Right ventricle myocardium inferior (tissue), 1 donor: ENCODE measurements at regions of chr20 and their contacts with region 1.

Region 1: DNA sequence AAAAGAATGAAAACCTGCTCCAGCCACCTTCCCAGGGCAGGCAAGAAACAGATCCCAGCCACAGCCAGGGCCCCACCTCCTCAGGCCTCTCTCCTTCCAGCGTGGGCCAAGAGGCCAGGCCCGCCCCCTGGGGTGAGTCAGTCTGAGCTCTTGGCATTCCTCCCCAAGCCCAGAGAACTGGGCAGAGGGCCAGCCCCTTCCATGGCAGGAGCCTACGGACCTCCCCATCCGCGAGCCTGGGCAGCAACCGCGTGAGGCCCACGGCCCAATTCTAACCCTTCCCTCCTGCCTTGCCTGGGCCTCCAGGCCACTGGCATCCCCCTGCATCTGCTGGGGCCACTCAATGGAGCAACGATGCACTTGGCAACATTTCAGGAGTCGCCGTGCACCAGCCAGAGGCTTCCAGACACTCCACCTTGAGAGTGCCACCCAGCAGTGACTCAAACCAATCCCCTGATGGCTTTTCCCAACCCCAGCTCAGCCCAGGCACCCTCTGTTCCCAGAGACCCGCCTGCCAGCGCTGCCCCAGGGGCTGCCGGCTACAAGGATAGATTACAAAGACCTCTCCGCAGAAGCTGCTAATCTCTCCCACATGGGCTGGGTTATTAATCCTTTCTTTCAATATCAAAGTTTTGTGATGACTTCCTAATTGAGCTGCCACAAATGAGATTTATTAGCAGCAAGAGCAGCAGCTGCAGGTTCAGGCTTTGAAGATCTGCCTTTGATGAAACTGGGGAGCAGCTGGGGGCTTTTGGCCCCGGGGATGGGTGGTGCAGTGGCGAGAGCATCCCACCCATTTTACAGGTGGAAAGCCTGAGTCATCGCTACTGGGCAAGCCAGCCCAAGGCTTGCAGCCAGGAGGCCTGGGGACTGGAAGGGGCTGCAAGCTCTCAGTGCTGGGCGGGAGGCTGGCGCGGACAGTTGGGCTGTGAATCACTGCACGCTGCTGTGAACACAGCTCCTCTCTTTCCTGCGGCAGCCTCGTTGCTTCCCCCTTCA is 85.7 kb downstream of the NFATC2 start:
- DNase-seq: peak; percentile 95
- ATAC-seq: peak; percentile 98

Region 2: GRCh38 chr20:51385646-51386530 is 70.9 kb before region 1 on chr20:
- intact Hi-C with region 1: loop called (anchors 5 kb)
- DNase-seq: no peak
- ATAC-seq: peak; percentile 39

Region 3: DNA sequence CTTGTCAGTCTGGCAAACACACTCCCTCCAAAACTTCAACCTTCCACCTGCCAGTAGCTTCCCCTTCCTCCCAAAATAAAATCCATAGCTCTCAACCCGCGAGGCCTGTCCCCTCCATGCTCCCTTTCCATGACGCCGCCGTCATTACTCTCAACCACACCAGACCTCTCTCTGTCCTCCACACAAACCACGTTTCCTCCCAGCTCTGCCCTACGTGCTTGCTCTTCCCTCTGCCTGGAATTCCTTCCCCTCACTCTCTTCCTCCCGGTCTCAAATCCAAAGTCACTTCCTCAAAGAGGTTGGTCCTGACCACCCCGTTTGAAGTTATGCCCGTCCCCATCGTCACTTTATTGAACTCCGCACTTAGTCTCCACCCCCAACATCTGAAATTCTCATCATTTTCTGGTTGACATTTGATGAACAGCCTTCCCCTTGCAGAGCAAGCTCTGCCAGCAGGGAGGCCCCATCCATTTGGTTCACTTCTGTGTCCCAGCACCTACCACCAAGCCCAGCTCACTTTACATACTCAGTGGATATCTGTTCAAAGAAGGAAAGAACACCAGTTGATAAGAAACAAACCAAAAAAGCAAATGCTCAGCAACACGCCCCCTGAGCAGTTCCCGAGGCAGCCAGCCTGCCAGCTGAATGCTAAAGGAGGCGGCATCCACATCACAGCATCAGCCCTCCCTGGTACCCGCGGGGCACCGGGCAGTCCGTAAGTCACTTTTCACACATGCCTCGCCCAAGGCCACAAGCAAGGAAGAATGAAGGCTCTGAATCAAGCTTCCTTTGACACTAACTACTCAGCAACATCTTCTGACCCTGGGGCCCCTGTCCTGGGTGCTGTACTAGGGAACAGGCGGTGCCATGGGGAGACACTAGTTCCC is 39.3 kb before region 1 on chr20:
- intact Hi-C with region 1: loop called (anchors 5 kb)
- DNase-seq: no peak
- ATAC-seq: no peak

Region 4: GRCh38 chr20:51492167-51493092 is 35.6 kb after region 1 on chr20:
- intact Hi-C with region 1: loop called (anchors 2 kb)
- DNase-seq: peak; percentile 80
- ATAC-seq: peak; percentile 90

Region 5: GRCh38 chr20:51828467-51829161 is 371.8 kb after region 1 on chr20:
- intact Hi-C with region 1: no loop called
- DNase-seq: no peak
- ATAC-seq: no peak